Common myeloid progenitor, CD34-positive (primary cell): ENCODE measurements at regions of chr18 and their contacts with region 1.

Region 1: DNA sequence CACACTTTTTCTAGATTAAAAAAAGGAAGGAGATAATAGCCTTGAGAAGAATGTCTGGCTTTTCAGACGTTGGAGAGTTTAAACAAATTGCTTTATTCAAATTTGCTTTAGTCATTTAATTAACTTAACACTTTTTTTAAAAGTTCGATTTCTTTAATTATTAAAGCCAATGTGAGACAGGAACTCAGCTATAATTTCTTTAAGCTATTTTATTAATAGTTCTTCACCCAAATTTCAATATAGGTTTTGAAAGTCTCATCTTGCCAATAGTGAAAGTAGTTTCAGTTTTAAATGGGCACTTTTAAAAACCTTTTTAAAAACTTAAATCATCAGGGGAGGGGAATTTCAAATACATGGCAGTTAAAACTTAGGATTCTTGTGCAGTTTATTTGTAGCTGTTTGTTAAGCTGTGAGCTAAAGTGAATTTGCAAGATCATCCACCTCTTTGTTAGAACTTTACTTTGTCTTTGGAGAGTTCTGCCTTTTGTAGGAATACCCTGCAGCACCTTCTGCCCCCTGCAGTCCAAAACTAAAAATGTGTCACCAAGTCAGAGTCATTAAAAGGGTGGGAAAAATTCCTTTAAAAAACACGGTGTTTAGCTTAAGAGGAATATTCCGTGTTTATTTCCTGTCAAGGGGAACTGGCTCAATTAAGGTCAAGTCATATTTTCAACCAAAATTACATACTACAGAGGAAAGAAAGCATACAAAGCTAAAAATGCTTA is 4.6 kb downstream of the TGIF1 start:
- DNase-seq: peak; percentile 70 to 75 (median 73)
- H3K4me3 ChIP-seq: peak overlapping the region in 6 of 7 experiments; percentile 45 to 95 (median 88)
- H3K27ac ChIP-seq: peak overlapping the region; percentile 16 to 92
- H3K4me1 ChIP-seq: peaks cover 12 to 53% (median 37%) of the 10 kb centered on the region in 4 experiments
- H3K27me3 ChIP-seq: no peaks in the 10 kb centered on the region

Region 2: DNA sequence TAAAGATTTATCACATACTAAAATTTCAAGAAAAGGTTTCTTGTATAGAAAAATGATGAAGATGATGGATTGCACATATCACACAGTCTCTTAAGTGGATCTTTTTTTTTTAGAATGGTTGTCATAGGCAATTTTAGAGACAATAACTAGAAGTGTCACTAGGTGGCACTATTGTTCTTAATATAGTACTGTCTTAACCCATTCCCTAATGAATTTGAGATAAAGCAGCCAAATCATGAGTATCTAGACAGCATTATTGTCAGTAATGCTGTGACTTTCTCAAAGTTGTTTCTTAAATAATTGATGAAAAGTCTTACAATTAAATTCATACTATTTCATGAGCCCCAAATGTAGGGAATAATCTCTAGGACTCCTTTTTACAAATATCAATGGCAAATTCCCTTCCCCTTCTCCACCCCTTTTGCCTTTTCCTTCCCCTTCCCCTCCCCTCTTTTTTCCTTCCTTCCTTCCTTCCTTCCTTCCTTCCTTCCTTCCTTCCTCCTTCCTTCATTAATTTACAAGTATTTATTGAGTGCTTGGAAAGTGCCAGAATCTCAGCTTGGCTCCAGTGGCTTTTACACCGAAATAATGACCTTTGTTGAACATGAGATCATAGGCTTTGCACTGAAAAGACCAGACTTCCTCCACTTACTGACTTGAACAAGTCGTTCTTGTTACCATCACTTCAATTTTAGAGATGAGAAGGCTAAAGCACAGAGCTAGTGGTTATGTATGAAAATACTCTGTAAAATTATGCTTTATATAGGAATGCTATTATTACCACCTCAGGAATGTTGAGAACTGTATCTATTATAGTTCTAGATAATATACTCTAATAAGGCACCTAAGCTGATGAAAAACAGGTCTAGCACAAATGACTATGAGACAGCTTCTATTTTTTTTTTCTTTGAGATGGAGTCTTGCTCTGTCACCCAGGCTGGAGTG is 172.8 kb before region 1 on chr18:
- CTCF ChIA-PET with region 1: interaction called, 16 read pairs
- POLR2A ChIA-PET with region 1: interaction called, 3 read pairs
- DNase-seq: peak; percentile 78 to 90 (median 87)
- H3K4me3 ChIP-seq: no peak overlapping the region
- H3K27ac ChIP-seq: no peak overlapping the region
- H3K4me1 ChIP-seq: no peaks in the 10 kb centered on the region
- H3K27me3 ChIP-seq: no peaks in the 10 kb centered on the region

Region 3: GRCh38 chr18:3441290-3441689 is 13.2 kb before region 1 on chr18:
- CTCF ChIA-PET with region 1: interaction called, 13 read pairs
- POLR2A ChIA-PET with region 1: no interaction called
- DNase-seq: peak; percentile 57 to 62 (median 59)
- H3K4me3 ChIP-seq: peak overlapping the region in 1 of 7 experiments; percentile 5
- H3K27ac ChIP-seq: no peak overlapping the region
- H3K4me1 ChIP-seq: peaks cover under 1 to 12% (median 4%) of the 10 kb centered on the region in 4 experiments
- H3K27me3 ChIP-seq: no peaks in the 10 kb centered on the region

Region 4: GRCh38 chr18:3466045-3466444 is 11.5 kb after region 1 on chr18:
- CTCF ChIA-PET with region 1: interaction called, 12 read pairs
- POLR2A ChIA-PET with region 1: no interaction called
- DNase-seq: peak in 1 of 3 donors; percentile 20
- H3K4me3 ChIP-seq: no peak overlapping the region
- H3K27ac ChIP-seq: no peak overlapping the region
- H3K4me1 ChIP-seq: peaks cover 0 to 20% (median 11%) of the 10 kb centered on the region in 4 experiments
- H3K27me3 ChIP-seq: no peaks in the 10 kb centered on the region

Region 5: DNA sequence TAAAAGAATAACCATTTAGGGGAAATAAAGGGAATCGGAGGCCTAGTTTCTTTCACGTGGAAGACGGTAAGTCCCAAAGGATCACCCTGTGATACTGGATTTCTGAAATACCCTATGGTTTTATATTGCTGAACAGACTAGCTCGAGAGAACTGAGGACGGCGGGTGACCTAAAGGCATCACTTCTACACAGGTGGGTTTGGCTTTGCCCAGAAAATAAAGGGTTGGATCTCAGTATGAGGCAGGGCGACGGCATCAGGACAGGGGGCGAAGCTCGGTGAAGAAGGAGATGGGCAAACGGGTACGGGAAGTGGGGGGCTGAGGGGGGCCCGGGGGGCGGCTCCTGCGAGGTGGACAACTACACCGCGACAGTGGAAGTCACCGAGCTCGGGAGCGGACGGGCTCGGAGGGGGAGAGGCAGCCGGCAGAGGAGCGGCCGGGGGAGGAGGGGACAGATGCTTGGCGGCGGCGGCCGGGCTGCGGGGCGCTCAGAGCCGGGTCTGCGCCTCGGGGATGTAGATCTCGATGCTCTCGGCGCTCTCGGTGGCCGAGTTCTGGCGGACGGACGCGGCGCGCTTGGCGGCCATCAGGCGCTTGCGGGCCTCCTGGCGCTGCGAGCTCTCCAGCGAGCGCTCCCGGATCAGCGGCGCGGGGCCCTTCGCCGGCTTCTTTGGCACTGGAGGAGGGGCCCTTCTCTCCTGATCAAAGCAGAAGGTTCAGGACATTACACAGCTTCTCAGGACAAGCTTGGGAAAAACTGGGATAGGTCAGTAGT is 44.4 kb after region 1 on chr18:
- CTCF ChIA-PET with region 1: interaction called, 12 read pairs
- POLR2A ChIA-PET with region 1: interaction called, 12 read pairs
- DNase-seq: peak; percentile 33 to 72 (median 57)
- H3K4me3 ChIP-seq: peak overlapping the region; percentile 46 to 78 (median 63)
- H3K27ac ChIP-seq: no peak overlapping the region
- H3K4me1 ChIP-seq: peaks cover 9 to 23% (median 19%) of the 10 kb centered on the region in 4 experiments
- H3K27me3 ChIP-seq: peaks cover 0 to 4% (median 0%) of the 10 kb centered on the region in 5 experiments

Region 6: DNA sequence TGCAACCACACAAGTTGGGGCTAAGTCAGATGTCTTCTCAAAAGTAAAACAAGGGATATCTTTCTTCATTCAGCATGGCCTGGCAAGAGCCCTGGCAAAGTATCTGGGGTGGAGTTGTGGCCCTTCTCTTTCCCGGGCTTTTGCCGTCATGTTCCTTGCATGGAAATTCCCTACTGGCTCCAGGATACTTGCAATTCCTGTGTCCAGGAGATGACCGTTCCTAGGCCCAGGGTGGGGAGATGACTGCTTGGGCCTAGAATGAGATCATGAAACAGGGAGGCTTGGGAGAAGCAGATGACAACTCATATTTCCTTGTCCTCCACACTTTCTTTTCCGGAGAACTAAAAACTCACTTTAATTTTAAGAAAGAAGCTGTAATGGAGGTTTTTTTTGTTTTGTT is 56.4 kb after region 1 on chr18:
- CTCF ChIA-PET with region 1: no interaction called
- POLR2A ChIA-PET with region 1: no interaction called
- DNase-seq: no peak
- H3K4me3 ChIP-seq: no peak overlapping the region
- H3K27ac ChIP-seq: no peak overlapping the region
- H3K4me1 ChIP-seq: peaks cover 0 to 10% (median 0%) of the 10 kb centered on the region in 4 experiments
- H3K27me3 ChIP-seq: no peaks in the 10 kb centered on the region

Region 7: GRCh38 chr18:3585656-3586509 is 131.4 kb after region 1 on chr18:
- CTCF ChIA-PET with region 1: interaction called, 18 read pairs
- POLR2A ChIA-PET with region 1: no interaction called
- DNase-seq: peak; percentile 85 to 88 (median 85)
- H3K4me3 ChIP-seq: no peak overlapping the region
- H3K27ac ChIP-seq: no peak overlapping the region
- H3K4me1 ChIP-seq: peaks cover 5 to 20% (median 16%) of the 10 kb centered on the region in 4 experiments
- H3K27me3 ChIP-seq: no peaks in the 10 kb centered on the region